ENCODE measurements at regions of chr2 and their contacts with region 1.

Region 1: GRCh38 chr2:201071479-201072200 is at the starts of genes HYCC2 and NDUFB3:
- DNase-seq: peak; percentile 95
- ATAC-seq: peak; percentile 98
- H3K4me3 ChIP-seq: peak within 1 kb of the TSS; percentile 77 to 91 (median 91)
- H3K27ac ChIP-seq: peak within 1 kb of the TSS; percentile 88
- H3K4me1 ChIP-seq: peaks cover 34% of the 10 kb centered on the region
- H3K27me3 ChIP-seq: no peaks in the 10 kb centered on the region; a peak in 1 of 5 replicates
- CTCF ChIP-seq: peak; percentile 82
- EP300 ChIP-seq: no peak; a peak in 3 of 4 replicates
- POLR2A ChIP-seq: peak; percentile 65 to 71
- RAD21 ChIP-seq: peak; percentile 51
- total RNA-seq, gene HYCC2: 13.9 and 21.5 TPM in 2 replicates
- total RNA-seq, gene NDUFB3: 159 and 209 TPM in 2 replicates

Region 2: GRCh38 chr2:200901459-200902072 is 170.1 kb before region 1 on chr2:
- CTCF ChIA-PET with region 1: interaction called, 26 read pairs
- POLR2A ChIA-PET with region 1: interaction called, 5 read pairs
- in situ Hi-C with region 1: loop called (anchors 5 kb)
- intact Hi-C with region 1: loop called (anchors 1 kb)
- DNase-seq: peak; percentile 94
- ATAC-seq: peak; percentile 97
- H3K4me3 ChIP-seq: no peak overlapping the region
- H3K27ac ChIP-seq: no peak overlapping the region
- H3K4me1 ChIP-seq: no peaks in the 10 kb centered on the region
- H3K27me3 ChIP-seq: no peaks in the 10 kb centered on the region
- CTCF ChIP-seq: peak; percentile 92
- EP300 ChIP-seq: no peak
- POLR2A ChIP-seq: no peak
- RAD21 ChIP-seq: peak; percentile 87

Region 3: DNA sequence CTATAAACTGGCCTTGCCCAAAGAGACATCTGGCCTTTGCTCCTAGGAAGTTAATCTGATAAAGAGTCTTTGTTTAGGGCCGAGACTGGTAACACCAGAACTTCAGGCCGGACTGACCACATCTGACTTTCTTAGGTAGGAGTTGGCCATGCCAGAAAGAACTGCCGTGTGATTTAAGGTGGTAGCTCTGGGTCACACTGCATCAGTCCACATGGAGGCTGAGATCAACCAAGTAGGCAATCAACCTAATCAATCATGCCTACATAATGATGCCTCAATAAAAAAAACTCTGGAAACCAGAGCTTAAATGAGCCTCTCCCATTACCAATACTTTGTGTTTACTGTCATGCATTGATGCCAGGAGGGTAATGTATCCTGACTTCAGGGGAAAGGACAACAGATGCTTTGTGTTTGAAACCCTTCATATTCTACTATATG is 64.1 kb before region 1 on chr2:
- CTCF ChIA-PET with region 1: no interaction called
- POLR2A ChIA-PET with region 1: interaction called, 12 read pairs
- in situ Hi-C with region 1: no loop called
- intact Hi-C with region 1: no loop called
- DNase-seq: peak; percentile 52
- ATAC-seq: peak; percentile 59
- H3K4me3 ChIP-seq: peak overlapping the region in 1 of 3 experiments; percentile 34; a peak in 2 of 6 replicates
- H3K27ac ChIP-seq: peak overlapping the region; percentile 64
- H3K4me1 ChIP-seq: peaks cover 28% of the 10 kb centered on the region
- H3K27me3 ChIP-seq: no peaks in the 10 kb centered on the region
- CTCF ChIP-seq: no peak
- EP300 ChIP-seq: 0 out of 4 replicates have a peak, but pooled peaks of 1 of the 2 experiments have one; percentile 30
- POLR2A ChIP-seq: no peak
- RAD21 ChIP-seq: no peak

Region 4: GRCh38 chr2:201057087-201057521 is 14.5 kb before region 1 on chr2:
- CTCF ChIA-PET with region 1: no interaction called
- POLR2A ChIA-PET with region 1: interaction called, 17 read pairs
- in situ Hi-C with region 1: no loop called
- intact Hi-C with region 1: loop called (anchors 1 kb)
- DNase-seq: peak; percentile 32
- ATAC-seq: no peak
- H3K4me3 ChIP-seq: no peak overlapping the region; a peak in 1 of 6 replicates
- H3K27ac ChIP-seq: peak overlapping the region; percentile 68
- H3K4me1 ChIP-seq: peaks cover 46% of the 10 kb centered on the region
- H3K27me3 ChIP-seq: no peaks in the 10 kb centered on the region
- CTCF ChIP-seq: no peak
- EP300 ChIP-seq: no peak
- POLR2A ChIP-seq: no peak
- RAD21 ChIP-seq: no peak

Region 5: GRCh38 chr2:201084863-201085262 is 13.2 kb after region 1 on chr2:
- CTCF ChIA-PET with region 1: no interaction called
- POLR2A ChIA-PET with region 1: no interaction called
- in situ Hi-C with region 1: no loop called
- intact Hi-C with region 1: no loop called
- DNase-seq: no peak
- ATAC-seq: no peak
- H3K4me3 ChIP-seq: no peak overlapping the region
- H3K27ac ChIP-seq: no peak overlapping the region
- H3K4me1 ChIP-seq: peaks cover 6% of the 10 kb centered on the region
- H3K27me3 ChIP-seq: no peaks in the 10 kb centered on the region
- CTCF ChIP-seq: no peak
- EP300 ChIP-seq: no peak
- POLR2A ChIP-seq: no peak
- RAD21 ChIP-seq: no peak

Region 6: DNA sequence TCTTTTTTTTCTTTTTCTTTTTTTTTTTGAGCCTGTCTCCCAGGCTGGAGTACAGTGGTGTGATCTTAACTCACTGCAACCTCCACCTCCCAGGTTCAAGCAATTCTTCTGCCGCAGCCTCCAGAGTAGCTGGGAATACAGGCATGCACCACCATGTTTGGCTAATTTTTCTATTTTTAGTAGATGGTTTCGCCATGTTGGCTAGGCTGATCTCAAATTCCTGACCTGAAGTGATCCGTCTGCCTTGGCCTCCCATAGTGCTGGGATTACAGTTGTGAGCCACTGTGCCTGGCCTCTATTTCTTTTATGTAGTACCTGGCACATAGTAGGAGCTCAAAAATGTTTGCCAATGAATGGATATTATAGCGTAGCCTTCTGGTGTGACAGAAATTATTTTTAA is 37.5 kb after region 1 on chr2:
- CTCF ChIA-PET with region 1: no interaction called
- POLR2A ChIA-PET with region 1: no interaction called
- in situ Hi-C with region 1: no loop called
- intact Hi-C with region 1: no loop called
- DNase-seq: no peak
- ATAC-seq: no peak
- H3K4me3 ChIP-seq: no peak overlapping the region
- H3K27ac ChIP-seq: no peak overlapping the region
- H3K4me1 ChIP-seq: peaks cover 40% of the 10 kb centered on the region
- H3K27me3 ChIP-seq: no peaks in the 10 kb centered on the region
- CTCF ChIP-seq: no peak
- EP300 ChIP-seq: no peak
- POLR2A ChIP-seq: no peak
- RAD21 ChIP-seq: no peak

Region 7: DNA sequence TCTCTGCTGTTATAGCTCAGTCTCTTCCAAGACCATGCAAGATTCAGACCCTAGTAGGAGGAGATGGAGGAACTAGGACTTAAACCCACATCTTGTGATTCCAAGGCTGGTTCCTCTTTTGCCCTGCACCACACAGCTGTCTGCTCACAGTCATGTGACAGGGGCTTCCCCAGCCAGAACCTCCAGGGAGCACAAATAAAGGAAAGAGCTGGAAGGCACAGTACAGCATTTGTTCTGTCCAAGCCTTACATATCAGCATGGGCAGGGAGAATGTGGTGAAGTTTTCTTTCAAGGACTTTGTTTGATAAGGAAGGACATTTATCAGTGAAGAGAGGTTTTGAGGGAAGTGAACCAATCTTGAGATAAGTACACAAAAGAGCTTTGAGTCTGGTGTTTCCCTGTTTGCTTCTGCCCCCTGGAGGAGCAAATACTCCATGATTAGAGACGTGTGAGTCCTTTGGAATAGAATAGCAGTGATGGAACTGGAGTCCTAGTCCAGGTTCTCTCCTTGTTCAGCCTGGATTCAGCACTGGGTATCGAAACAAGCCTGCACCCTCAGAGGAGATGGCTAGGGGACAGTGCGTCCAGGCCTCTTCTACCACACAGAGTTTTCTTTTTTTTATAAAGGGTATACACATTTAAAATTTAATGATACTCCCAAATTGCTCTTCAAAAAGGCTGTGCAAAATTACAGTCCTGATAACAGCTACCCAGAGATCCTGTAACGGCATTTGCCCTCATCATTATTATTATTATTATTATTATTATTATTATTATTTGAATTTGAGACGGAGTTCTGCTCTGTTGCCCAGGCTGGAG is 86.7 kb after region 1 on chr2:
- CTCF ChIA-PET with region 1: interaction called, 4 read pairs
- POLR2A ChIA-PET with region 1: interaction called, 20 read pairs
- in situ Hi-C with region 1: no loop called
- intact Hi-C with region 1: loop called (anchors 1 kb)
- DNase-seq: peak; percentile 91
- ATAC-seq: peak; percentile 95
- H3K4me3 ChIP-seq: no peak overlapping the region
- H3K27ac ChIP-seq: peak overlapping the region; percentile 17
- H3K4me1 ChIP-seq: peaks cover 10% of the 10 kb centered on the region
- H3K27me3 ChIP-seq: no peaks in the 10 kb centered on the region
- CTCF ChIP-seq: peak; percentile 92
- EP300 ChIP-seq: no peak
- POLR2A ChIP-seq: no peak
- RAD21 ChIP-seq: peak; percentile 89

Region 8: GRCh38 chr2:201176081-201176481 is 104.4 kb after region 1 on chr2:
- CTCF ChIA-PET with region 1: no interaction called
- POLR2A ChIA-PET with region 1: no interaction called
- in situ Hi-C with region 1: loop called (anchors 5 kb)
- intact Hi-C with region 1: loop called (anchors 1 kb)
- DNase-seq: peak; percentile 21
- ATAC-seq: no peak
- H3K4me3 ChIP-seq: no peak overlapping the region; a peak in 1 of 6 replicates
- H3K27ac ChIP-seq: no peak overlapping the region
- H3K4me1 ChIP-seq: peaks cover 33% of the 10 kb centered on the region
- H3K27me3 ChIP-seq: no peaks in the 10 kb centered on the region
- CTCF ChIP-seq: no peak
- EP300 ChIP-seq: no peak
- POLR2A ChIP-seq: no peak
- RAD21 ChIP-seq: no peak